MCF 10A (cell line): ENCODE measurements at regions of chr16 and their contacts with region 1.

Region 1: DNA sequence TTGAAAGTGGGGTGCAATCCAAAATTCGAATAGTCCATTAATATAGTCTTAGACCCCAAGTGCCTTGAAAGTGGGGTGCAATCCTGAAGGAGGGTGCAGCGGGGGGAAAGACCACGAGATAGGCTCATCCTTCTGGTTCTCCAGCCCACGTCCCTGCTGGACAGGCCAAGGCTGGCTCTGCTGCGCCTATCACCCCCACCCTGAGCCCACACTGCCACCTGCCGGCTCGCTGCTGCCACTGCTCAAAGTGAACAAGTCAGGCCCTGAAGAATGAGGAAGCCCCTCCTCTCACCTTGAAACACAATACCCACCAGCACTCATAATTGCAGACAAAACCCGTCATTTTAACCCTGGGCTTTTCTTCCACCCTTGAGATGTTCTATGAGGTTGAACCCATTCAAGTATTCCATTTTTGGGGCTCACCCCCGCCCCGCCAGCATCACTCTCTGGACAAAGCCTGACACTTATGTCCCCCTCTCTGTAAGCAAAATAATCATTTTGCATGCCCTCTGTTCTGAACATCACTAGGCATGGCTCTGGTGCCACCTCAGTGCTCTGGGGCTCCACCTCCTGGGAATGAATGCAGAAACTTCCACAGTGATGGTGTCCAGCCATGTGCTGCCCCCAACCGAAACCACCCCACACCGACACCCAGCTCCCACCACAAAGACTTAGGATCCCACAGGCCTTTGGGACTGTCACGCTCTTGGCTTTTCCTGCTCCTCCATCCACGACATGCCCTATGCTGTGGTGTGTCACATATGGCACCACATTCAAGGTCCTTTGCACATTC is 56.8 kb downstream of the BEAN1 start:
- DNase-seq: peak; percentile 73
- H3K4me3 Mint-ChIP-seq: no peak overlapping the region
- H3K27ac Mint-ChIP-seq: no peak overlapping the region
- H3K4me1 Mint-ChIP-seq: peaks cover 33% of the 10 kb centered on the region
- H3K27me3 Mint-ChIP-seq: no peaks in the 10 kb centered on the region
- CTCF ChIP-seq: peak; percentile 96

Region 2: GRCh38 chr16:66357153-66357928 is 126.5 kb before region 1 on chr16:
- CTCF ChIA-PET with region 1: interaction called, 10 read pairs
- POLR2A ChIA-PET with region 1: no interaction called
- intact Hi-C with region 1: loop called (anchors 1 kb)
- DNase-seq: peak; percentile 77
- H3K4me3 Mint-ChIP-seq: no peak overlapping the region
- H3K27ac Mint-ChIP-seq: no peak overlapping the region
- H3K4me1 Mint-ChIP-seq: peaks cover 17% of the 10 kb centered on the region
- H3K27me3 Mint-ChIP-seq: peaks cover 59% of the 10 kb centered on the region
- CTCF ChIP-seq: peak; percentile 56

Region 3: GRCh38 chr16:66502020-66502913 is 18.4 kb after region 1 on chr16:
- CTCF ChIA-PET with region 1: interaction called, 9 read pairs
- POLR2A ChIA-PET with region 1: interaction called, 5 read pairs
- intact Hi-C with region 1: loop called (anchors 2 kb)
- DNase-seq: peak; percentile 85
- H3K4me3 Mint-ChIP-seq: no peak overlapping the region
- H3K27ac Mint-ChIP-seq: peak overlapping the region; percentile 31
- H3K4me1 Mint-ChIP-seq: peaks cover 39% of the 10 kb centered on the region
- H3K27me3 Mint-ChIP-seq: no peaks in the 10 kb centered on the region
- CTCF ChIP-seq: no peak

Region 4: GRCh38 chr16:66516808-66517585 is 33.1 kb after region 1 on chr16:
- CTCF ChIA-PET with region 1: interaction called, 11 read pairs
- POLR2A ChIA-PET with region 1: interaction called, 4 read pairs
- intact Hi-C with region 1: loop called (anchors 5 kb)
- DNase-seq: peak; percentile 99
- H3K4me3 Mint-ChIP-seq: peak overlapping the region; percentile 67
- H3K27ac Mint-ChIP-seq: peak overlapping the region; percentile 98
- H3K4me1 Mint-ChIP-seq: peaks cover 47% of the 10 kb centered on the region
- H3K27me3 Mint-ChIP-seq: no peaks in the 10 kb centered on the region
- CTCF ChIP-seq: no peak

Region 5: GRCh38 chr16:66534376-66534799 is 50.5 kb after region 1 on chr16:
- CTCF ChIA-PET with region 1: no interaction called
- POLR2A ChIA-PET with region 1: no interaction called
- intact Hi-C with region 1: no loop called
- DNase-seq: no peak
- H3K4me3 Mint-ChIP-seq: no peak overlapping the region
- H3K27ac Mint-ChIP-seq: no peak overlapping the region
- H3K4me1 Mint-ChIP-seq: no peaks in the 10 kb centered on the region
- H3K27me3 Mint-ChIP-seq: no peaks in the 10 kb centered on the region
- CTCF ChIP-seq: no peak

Region 6: DNA sequence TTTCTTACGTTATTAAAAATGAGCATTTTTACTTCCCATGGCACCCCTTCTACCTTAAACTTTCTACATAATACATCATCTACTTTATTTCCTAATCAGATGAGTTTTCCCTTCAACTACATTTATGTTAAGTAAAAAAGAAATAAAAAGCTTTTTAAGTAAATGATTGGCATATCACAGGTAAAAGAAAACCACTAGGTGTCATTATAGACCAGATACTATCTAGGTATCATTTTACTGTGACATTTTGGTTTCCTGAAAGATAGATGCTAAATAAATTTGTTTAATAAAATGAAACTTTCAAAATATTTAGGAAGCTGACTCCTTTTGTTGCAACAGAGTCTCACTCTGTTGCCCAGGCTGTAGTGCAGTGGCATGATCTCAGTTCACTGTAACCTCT is 78.5 kb after region 1 on chr16:
- CTCF ChIA-PET with region 1: no interaction called
- POLR2A ChIA-PET with region 1: no interaction called
- intact Hi-C with region 1: no loop called
- DNase-seq: no peak
- H3K4me3 Mint-ChIP-seq: no peak overlapping the region
- H3K27ac Mint-ChIP-seq: no peak overlapping the region
- H3K4me1 Mint-ChIP-seq: no peaks in the 10 kb centered on the region
- H3K27me3 Mint-ChIP-seq: no peaks in the 10 kb centered on the region
- CTCF ChIP-seq: peak; percentile 24

Region 7: GRCh38 chr16:66588981-66589713 is 105.3 kb after region 1 on chr16:
- CTCF ChIA-PET with region 1: interaction called, 3 read pairs
- POLR2A ChIA-PET with region 1: no interaction called
- intact Hi-C with region 1: loop called (anchors 2 kb)
- DNase-seq: peak; percentile 53
- H3K4me3 Mint-ChIP-seq: no peak overlapping the region
- H3K27ac Mint-ChIP-seq: no peak overlapping the region
- H3K4me1 Mint-ChIP-seq: no peaks in the 10 kb centered on the region
- H3K27me3 Mint-ChIP-seq: no peaks in the 10 kb centered on the region
- CTCF ChIP-seq: peak; percentile 54